ENCODE measurements at regions of chr7 and their contacts with region 1.

Region 1: GRCh38 chr7:129433847-129434674 is at the start of gene STRIP2:
- DNase-seq: peak; percentile 92
- H3K4me3 ChIP-seq: peak within 1 kb of the TSS; percentile 66 to 93 (median 90)
- H3K27ac ChIP-seq: peak within 1 kb of the TSS; percentile 54
- H3K4me1 ChIP-seq: peaks cover 21% of the 10 kb centered on the region
- H3K27me3 ChIP-seq: peaks cover 2 to 5% of the 10 kb centered on the region in 2 experiments
- CTCF ChIP-seq: peak in 1 of 2 donors; percentile 5
- POLR2A ChIP-seq: peak; percentile 86
- total RNA-seq, gene STRIP2: 8.8 and 10.0 TPM in 2 replicates

Region 2: GRCh38 chr7:129376076-129376777 is 57.8 kb before region 1 on chr7:
- CTCF ChIA-PET with region 1: interaction called, 24 read pairs
- POLR2A ChIA-PET with region 1: no interaction called
- dilution Hi-C with region 1: no loop called
- intact Hi-C with region 1: no loop called
- DNase-seq: peak; percentile 39
- H3K4me3 ChIP-seq: no peak overlapping the region
- H3K27ac ChIP-seq: no peak overlapping the region
- H3K4me1 ChIP-seq: peaks cover 10% of the 10 kb centered on the region
- H3K27me3 ChIP-seq: no peaks in the 10 kb centered on the region
- CTCF ChIP-seq: peak; percentile 38 to 57
- POLR2A ChIP-seq: no peak

Region 3: DNA sequence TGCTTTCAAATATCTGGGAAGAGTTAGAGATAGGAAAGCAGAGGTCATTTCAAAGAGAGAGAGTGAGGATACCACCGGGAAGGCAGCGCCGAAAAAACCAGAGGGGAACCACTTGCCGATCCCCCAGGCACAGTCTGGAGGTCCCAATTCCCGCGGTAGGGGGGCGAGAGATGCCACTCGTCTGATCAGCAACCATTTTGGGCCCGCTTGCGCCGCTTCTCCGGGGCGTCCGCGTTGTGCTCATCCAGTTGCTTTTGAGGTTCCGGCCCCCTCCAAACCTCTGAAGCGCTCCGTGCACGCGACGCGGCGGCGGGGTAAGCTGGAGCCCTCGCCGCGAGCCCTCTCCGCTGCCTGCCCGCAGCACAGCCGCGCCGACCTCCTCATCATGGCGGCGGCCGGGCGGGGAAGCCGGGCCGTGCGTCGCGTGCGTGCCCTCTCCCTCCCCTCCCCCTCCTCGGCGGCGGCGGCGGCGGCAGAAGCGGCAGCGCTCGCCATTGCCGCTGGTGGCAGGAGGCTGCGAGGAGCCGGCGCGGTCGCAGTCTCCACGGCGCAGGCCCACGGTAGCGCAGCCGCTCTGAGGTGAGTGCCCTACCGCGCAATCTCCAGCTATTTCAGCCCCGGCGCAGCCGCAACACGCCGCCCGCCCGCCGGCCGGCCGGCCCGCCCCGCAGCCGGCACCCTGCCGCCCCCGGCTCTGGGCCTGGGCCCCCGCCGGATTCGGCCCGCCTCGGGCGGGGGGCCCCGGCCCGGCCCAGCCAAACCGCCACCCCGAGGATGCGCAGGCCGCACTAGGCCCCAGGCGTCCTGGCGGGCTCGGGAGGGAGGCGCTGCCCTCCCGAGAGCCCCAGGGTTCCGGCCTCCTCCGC is 177.4 kb after region 1 on chr7 and contains the start of gene NRF1:
- CTCF ChIA-PET with region 1: interaction called, 7 read pairs
- POLR2A ChIA-PET with region 1: no interaction called
- dilution Hi-C with region 1: no loop called
- intact Hi-C with region 1: loop called (anchors 1 kb)
- DNase-seq: peak; percentile 92
- H3K4me3 ChIP-seq: peak within 1 kb of the TSS; percentile 84 to 96 (median 95)
- H3K27ac ChIP-seq: peak within 1 kb of the TSS; percentile 81
- H3K4me1 ChIP-seq: peaks cover 13% of the 10 kb centered on the region
- H3K27me3 ChIP-seq: no peaks in the 10 kb centered on the region
- CTCF ChIP-seq: peak in 1 of 2 donors; percentile 10
- POLR2A ChIP-seq: peak; percentile 87
- total RNA-seq, gene NRF1: 17.4 and 20.3 TPM in 2 replicates